ENCODE measurements at regions of chr7 and their contacts with region 1.

Region 1: DNA sequence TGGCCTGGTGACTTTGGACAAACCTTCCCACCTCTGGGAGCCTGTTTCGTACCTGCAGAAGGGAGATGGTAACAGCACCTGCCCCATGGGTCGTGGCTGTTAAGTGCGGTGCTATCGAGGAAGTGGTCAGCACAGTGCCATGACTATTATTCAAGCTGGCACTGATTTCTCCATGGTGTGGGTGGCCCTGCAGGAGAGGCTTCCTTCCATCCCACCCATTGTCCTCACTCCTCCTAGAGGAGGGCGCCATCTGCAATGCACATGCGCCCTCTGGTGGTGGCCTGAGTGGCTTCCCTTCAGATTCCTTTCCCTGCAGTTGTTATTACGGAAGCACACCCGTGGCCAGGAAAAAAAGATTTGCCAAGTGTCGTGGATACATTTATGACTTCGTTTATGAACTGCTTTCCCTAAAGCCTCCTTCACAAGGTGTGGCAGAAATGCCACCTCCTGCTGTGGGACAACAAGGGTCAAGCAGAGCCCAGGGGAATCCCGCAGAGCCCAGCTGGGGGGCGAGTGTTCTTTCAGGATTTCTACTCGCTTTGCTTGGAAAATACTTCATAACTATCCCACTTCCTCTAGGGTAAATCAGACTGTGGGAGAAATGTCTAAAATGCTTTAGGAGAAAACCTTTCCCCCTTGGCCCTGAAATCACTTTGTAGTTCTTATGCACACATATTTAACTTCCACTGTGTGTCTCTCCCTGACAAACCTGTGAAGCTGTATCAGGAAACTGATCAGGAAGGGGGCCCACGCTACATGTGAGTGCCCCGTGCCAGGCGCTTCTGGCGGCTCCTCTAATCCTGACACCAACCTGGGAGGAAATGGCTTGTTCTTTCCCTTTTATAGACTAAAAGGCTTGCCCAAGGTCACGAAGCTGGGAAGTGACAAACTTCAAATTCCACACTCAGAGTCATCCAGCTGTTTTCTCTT is 98.0 kb upstream of the ANLN start:
- DNase-seq: peak; percentile 89 to 91
- H3K4me3 ChIP-seq: peak overlapping the region; percentile 29 to 43
- H3K27ac ChIP-seq: peak overlapping the region; percentile 80 to 87
- H3K4me1 ChIP-seq: peaks cover 0 to 32% (median 16%) of the 10 kb centered on the region in 4 donors
- H3K27me3 ChIP-seq: no peaks in the 10 kb centered on the region
- CTCF ChIP-seq: peak; percentile 96 to 98

Region 2: DNA sequence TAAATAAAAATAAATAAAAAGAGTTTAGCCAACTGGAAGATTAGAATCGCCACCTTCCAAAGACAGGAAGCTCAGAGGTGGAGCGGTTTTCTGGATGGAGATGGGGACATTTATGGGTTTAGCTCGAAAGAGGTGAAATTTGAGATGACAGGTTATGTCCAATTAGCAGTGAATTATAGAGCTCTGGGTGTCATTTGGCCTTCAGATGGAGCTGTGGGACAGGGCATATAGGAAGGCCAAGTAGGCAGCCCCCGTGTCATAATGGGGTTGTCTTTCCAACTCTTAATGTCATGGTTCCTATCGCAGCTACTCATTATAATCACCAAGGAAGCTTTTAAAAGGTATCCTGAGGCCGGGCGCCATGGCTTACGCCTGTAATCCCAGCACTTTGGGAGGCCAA is 159.6 kb before region 1 on chr7:
- intact Hi-C with region 1: loop called (anchors 10 kb)
- DNase-seq: no peak
- H3K4me3 ChIP-seq: no peak overlapping the region
- H3K27ac ChIP-seq: no peak overlapping the region
- H3K4me1 ChIP-seq: peaks cover 0 to 38% (median 23%) of the 10 kb centered on the region in 4 donors
- H3K27me3 ChIP-seq: no peaks in the 10 kb centered on the region
- CTCF ChIP-seq: no peak

Region 3: DNA sequence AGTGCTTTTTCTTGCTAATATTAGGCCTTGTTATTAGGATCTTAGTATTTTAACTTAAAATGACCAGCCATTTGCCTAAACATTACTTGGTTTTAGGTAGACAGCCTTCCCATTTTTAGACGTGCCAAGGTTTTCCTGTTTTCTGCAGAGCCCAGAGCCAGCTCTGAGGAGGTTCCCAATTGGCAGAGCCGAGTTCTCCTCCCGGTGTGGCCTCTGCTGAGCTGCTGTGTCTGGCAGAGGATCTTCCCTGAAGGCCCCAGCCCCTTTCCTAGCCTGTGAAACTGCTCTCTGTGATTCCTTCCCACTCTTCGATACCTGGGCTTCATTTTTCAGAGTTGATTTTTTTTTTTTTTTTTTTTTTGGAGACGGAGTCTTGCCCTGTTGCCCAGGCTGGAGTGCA is 47.2 kb before region 1 on chr7:
- intact Hi-C with region 1: no loop called
- DNase-seq: peak in 1 of 2 donors; percentile 34
- H3K4me3 ChIP-seq: no peak overlapping the region
- H3K27ac ChIP-seq: peak overlapping the region; percentile 82 to 90
- H3K4me1 ChIP-seq: peaks cover 0 to 33% (median 18%) of the 10 kb centered on the region in 4 donors
- H3K27me3 ChIP-seq: no peaks in the 10 kb centered on the region
- CTCF ChIP-seq: no peak

Region 4: DNA sequence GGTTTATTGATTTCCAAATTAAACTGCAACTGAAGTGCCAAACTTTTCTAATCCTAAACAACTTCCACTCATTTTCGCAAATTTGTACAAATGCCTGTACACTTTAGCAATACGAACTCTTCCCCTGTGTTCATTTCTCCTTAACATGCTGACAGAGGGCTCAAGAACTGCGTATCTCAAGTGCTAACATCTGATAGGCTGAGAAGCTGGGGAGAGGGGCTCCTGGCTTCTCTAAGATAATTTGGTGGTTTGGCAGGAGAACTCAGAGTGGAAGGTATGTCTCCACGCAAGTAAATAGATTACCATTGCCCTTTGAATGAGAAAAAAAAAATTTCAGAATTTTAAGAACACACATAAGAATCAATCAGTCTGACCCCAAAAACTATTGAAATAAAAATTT is 44.7 kb after region 1 on chr7:
- intact Hi-C with region 1: no loop called
- DNase-seq: no peak
- H3K4me3 ChIP-seq: no peak overlapping the region
- H3K27ac ChIP-seq: no peak overlapping the region
- H3K4me1 ChIP-seq: no peaks in the 10 kb centered on the region
- H3K27me3 ChIP-seq: no peaks in the 10 kb centered on the region
- CTCF ChIP-seq: no peak

Region 5: DNA sequence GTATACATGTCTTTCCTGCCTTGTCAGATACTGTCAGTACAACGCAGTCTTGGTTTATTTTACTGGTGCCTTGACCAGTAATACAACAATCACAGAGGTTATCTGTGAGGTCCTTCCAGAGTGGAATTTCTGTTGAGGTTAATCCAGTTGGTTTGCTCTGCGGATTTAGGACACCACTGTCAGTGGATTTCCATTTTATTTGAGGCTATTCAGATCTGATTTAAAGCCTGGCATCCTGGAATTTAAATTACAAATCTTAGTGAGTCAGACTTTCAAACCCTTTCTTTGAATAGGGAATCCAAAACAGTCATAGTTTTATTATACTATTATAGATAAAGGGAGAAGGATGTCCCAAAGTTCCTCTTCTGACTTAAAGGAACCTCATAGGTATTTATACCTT is 138.5 kb after region 1 on chr7:
- intact Hi-C with region 1: no loop called
- DNase-seq: no peak
- H3K4me3 ChIP-seq: no peak overlapping the region
- H3K27ac ChIP-seq: no peak overlapping the region
- H3K4me1 ChIP-seq: no peaks in the 10 kb centered on the region
- H3K27me3 ChIP-seq: no peaks in the 10 kb centered on the region
- CTCF ChIP-seq: no peak